Posterior vena cava (tissue), 2 donors: ENCODE measurements at regions of chrX and their contacts with region 1.

Region 1: DNA sequence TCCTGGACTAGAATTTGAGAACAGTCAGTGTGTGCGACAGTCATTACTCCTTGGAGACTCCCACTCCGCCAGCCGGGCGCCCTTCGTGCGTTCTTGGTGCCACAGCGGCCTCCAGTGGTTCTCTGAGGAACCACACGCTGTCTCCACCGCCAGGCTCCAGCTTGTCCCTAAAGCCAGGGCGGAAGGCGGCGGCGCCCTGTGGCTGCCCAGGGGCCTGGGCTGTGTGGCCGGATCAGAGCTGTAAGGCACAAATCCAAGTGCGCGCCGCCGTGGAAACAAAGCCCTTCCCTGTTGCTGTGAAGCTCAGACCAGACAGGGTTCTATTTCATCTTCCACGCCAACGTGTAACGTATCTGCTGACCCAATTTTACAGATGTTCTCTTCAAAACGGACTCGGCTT is 34.2 kb downstream of the IDS start:
- DNase-seq: peak; percentile 92

Region 2: GRCh38 chrX:147958291-147958690 is 1512.7 kb before region 1 on chrX:
- intact Hi-C with region 1: loop called in 1 of 2 experiments (anchors 5 kb)
- DNase-seq: no peak

Region 3: GRCh38 chrX:148133105-148133725 is 1337.7 kb before region 1 on chrX:
- intact Hi-C with region 1: loop called in 1 of 2 experiments (anchors 10 kb)
- DNase-seq: no peak

Region 4: GRCh38 chrX:150352581-150352980 is 881.6 kb after region 1 on chrX:
- intact Hi-C with region 1: no loop called
- DNase-seq: peak; percentile 1